K562 (cell line): ENCODE measurements at regions of chr9 and their contacts with region 1.

Region 1: DNA sequence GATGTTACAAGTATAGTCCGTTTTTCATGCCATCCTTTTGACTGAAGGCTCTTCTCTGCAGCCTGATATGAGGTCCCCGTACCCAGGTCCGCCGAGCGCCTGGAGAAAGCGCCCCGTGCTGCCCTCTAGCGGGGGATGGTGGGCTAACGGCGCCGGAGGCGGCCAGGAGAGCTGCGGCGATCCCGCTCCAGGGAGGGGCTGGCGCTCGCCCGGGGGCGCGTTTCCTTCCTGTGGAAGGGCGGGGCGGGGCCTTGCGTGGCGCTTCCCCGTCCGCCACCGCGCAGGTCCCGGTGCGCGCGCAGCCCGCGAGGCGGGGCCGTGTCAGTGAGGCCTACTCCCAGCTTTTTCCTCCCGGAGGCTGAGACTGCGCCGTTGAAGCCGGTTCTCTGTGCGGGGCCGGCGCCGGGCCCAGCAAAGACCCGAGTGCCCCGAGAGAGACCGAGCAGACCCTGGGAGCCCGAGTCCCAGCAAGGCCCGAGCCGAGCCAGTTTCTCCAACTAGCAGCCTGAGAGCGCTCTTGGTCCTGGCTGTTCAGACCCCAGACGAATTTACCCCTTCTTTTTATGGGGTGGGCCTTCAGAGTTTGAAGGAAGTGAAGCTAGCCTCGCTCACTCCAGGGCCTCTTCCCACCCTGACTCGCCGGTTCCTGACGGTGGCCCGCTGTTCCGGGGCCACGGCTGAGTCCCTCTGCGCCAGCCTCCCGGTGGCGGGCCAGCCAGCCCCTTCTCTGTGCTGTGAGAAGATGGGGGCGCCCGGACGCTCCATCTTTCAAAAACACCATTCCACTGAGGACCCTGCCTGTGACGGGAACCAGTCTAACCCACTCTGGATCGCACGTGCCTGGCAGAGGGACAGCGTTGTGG is 9.7 kb upstream of the PHF2 start:
- DNase-seq: peak; percentile 97 to 98 (median 98)
- ATAC-seq: peak; percentile 99
- H3K4me3 ChIP-seq: peak overlapping the region; percentile 48
- H3K27ac ChIP-seq: peak overlapping the region; percentile 77
- H3K4me1 ChIP-seq: peaks cover 7 to 13% of the 10 kb centered on the region in 2 experiments; a peak in 4 of 5 replicates
- H3K27me3 ChIP-seq: no peaks in the 10 kb centered on the region
- CTCF ChIP-seq: peak; percentile 92 to 93 (median 92)
- EP300 ChIP-seq: no peak; the same call in 1 of the 2 replicates
- POLR2A ChIP-seq: peak; percentile 92
- RAD21 ChIP-seq: peak; percentile 70 to 72

Region 2: GRCh38 chr9:93159601-93160471 is 406.8 kb before region 1 on chr9:
- CTCF ChIA-PET with region 1: no interaction called
- POLR2A ChIA-PET with region 1: no interaction called
- in situ Hi-C with region 1: no loop called
- intact Hi-C with region 1: loop called (anchors 10 kb)
- DNase-seq: peak; percentile 90 to 96 (median 94)
- ATAC-seq: peak; percentile 100
- H3K4me3 ChIP-seq: no peak overlapping the region
- H3K27ac ChIP-seq: no peak overlapping the region
- H3K4me1 ChIP-seq: peaks cover 0 to 9% of the 10 kb centered on the region in 2 experiments; a peak in 3 of 5 replicates
- H3K27me3 ChIP-seq: peaks cover 16 to 38% of the 10 kb centered on the region in 2 experiments
- CTCF ChIP-seq: peak; percentile 95 to 98 (median 97)
- EP300 ChIP-seq: no peak
- POLR2A ChIP-seq: no peak
- RAD21 ChIP-seq: peak; percentile 96